ENCODE measurements at regions of chr10 and their contacts with region 1.

Region 1: DNA sequence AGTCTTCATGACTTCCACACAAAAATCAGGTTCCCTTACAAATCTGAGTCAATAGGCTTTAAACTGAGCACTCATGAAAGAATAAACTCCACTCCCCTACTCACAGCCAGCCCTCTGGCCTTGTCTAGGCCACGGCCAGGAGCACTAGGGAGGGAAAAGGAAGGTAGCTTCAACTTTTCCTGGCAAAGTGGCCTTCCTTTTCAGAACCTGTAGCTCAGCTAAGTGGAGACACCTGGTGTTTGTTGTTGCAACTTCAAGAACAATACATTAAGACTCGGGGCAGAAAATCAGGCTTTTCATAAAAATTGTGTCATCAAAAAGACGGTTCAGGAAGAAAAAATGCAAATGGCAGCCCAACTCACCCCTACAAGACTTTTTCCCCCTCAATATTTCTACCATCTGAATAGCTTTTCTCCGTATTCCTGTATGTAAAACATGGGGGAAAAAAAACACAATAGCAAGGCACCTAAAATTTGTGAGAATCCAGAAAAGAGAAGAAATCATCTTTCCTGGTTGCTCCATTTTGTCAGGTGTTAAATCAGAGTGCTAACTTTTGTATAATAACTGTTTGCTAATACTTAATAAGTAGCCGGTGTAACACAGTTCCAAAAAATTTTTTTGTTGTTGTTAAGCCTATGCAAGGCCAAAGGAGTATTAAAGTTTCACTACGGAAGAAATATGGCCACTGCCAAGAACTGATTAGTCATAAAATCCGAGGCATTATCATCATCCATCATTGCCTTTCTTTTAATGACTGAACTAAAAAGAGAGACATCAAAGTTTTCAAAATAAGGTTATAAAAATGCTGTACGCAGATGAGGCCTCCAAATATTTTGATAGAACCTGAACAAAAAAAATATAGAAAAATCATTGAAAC is 66.2 kb upstream of the ARID5B start:
- DNase-seq: peak; percentile 70 to 74
- H3K4me3 ChIP-seq: no peak overlapping the region
- H3K4me3 Mint-ChIP-seq: peak overlapping the region; percentile 58
- H3K27ac Mint-ChIP-seq: peak overlapping the region; percentile 94
- H3K4me1 ChIP-seq: peaks cover 80% of the 10 kb centered on the region
- H3K4me1 Mint-ChIP-seq: peaks cover 61% of the 10 kb centered on the region
- H3K27me3 ChIP-seq: no peaks in the 10 kb centered on the region
- H3K27me3 Mint-ChIP-seq: no peaks in the 10 kb centered on the region
- CTCF ChIP-seq: peak; percentile 75 to 85

Region 2: DNA sequence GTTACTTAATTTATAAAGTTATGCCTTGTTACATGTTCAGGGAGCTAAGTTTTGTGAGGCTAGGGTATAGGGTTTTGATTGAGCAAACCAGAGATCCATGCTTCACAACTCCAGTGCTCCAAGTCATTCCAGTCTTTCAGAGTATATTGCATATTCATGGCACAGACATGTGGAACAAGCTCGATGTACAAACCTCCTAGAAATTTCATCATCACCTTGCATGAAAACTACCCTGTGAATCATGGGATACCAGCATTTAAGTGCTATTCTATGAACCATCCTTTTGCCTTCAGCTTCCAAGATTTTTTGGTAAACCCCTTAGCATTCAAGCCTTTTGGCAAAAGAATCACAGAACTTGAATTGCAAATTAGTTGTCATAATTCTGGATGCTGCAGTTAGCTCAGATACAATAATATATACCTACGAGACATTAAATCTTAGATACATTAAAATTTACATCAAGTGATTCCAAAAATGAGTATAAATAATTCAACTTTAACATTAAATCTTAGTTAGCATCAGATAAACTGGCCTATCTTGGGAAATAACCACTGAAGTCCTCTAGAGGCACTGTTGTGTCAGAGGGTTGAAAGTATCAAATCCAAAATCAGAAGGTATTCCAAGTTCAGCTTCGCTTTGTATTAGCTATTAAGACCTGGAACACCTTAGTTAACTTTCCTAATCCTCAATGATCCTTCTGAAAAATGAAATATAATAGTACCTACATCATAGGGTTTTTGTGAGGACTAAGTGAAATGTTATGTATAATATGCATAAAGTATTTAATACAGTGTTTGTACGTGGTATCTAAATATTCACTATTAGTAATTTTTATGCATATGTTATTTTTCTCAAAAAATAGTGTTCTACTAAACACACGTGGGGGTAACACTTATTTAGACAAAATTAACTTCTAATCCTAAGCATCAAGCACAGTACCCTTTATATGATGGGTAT is 228.1 kb before region 1 on chr10:
- CTCF ChIA-PET with region 1: no interaction called
- POLR2A ChIA-PET with region 1: no interaction called
- intact Hi-C with region 1: loop called (anchors 5 kb)
- DNase-seq: no peak
- H3K4me3 ChIP-seq: no peak overlapping the region
- H3K4me3 Mint-ChIP-seq: no peak overlapping the region
- H3K27ac Mint-ChIP-seq: no peak overlapping the region
- H3K4me1 ChIP-seq: no peaks in the 10 kb centered on the region
- H3K4me1 Mint-ChIP-seq: no peaks in the 10 kb centered on the region
- H3K27me3 ChIP-seq: no peaks in the 10 kb centered on the region
- H3K27me3 Mint-ChIP-seq: peaks cover 30% of the 10 kb centered on the region
- CTCF ChIP-seq: peak; percentile 80 to 88

Region 3: DNA sequence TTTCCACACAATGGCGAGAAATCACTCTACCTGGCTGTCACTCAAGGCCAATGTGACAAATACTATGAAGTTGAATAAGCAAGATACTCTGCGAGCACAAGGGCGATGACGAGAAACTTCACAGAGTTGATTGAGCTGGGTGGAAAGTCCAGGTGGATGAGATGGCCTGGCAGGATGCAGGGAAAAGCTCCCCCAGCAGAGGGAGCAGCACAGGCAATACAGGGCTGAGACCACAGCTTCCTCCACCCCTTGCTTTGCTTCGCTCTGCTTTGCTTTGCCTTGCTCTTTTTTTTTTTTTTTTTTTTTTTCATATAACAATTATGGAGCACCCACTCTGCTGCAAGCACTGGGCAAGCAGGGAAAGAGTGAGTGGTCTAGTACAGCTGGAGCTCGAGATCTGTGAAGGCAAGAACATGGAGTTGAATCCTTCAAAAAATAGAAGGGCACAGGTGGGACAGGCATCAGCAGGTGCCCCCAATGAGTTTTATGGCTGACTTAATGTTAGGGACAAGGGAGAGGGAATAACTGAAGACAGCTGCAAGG is 84.3 kb before region 1 on chr10:
- CTCF ChIA-PET with region 1: interaction called, 132 read pairs
- POLR2A ChIA-PET with region 1: interaction called, 7 read pairs
- intact Hi-C with region 1: loop called (anchors 1 kb)
- DNase-seq: peak; percentile 93 to 94
- H3K4me3 ChIP-seq: no peak overlapping the region
- H3K4me3 Mint-ChIP-seq: peak overlapping the region; percentile 27
- H3K27ac Mint-ChIP-seq: peak overlapping the region; percentile 83
- H3K4me1 ChIP-seq: peaks cover 65% of the 10 kb centered on the region
- H3K4me1 Mint-ChIP-seq: peaks cover 54% of the 10 kb centered on the region
- H3K27me3 ChIP-seq: no peaks in the 10 kb centered on the region
- H3K27me3 Mint-ChIP-seq: no peaks in the 10 kb centered on the region
- CTCF ChIP-seq: peak; percentile 92 to 98

Region 4: DNA sequence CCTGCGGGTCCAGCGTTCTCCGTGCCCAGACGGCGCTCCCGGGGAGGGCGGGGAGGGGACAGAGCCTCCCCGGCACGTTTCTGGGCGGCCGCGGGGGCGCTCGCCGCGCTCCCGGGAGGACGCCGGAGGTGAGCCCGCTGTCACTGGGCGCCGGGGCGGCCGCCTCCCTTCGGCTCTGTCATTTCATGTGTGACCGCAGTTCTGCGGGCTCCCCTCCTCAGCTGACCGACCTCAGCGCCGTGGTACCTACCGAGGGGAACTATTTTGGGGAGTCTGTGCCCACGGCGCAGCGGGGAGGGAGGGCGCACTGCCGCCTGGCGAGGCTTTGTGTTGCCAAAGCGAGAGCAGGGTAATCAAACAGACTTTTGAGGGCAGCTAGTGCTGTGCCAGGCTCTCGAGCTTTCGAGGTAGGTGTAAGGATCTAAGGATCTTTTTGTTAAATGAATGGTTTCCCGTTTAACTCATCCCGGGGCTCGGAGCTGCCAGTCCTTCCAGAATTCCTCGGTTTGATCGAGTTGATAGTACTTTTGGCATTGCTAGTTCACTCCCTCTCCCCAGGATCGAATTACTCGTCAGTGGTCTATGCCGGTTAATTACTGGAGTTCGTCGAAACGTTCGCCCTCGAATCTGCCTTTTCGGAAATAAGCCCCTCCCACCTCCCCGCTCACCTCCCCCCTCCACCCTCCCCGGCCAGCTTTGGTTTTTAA is 68.1 kb after region 1 on chr10:
- CTCF ChIA-PET with region 1: interaction called, 17 read pairs
- POLR2A ChIA-PET with region 1: interaction called, 12 read pairs
- intact Hi-C with region 1: loop called (anchors 1 kb)
- DNase-seq: peak in 1 of 2 experiments; percentile 84
- H3K4me3 ChIP-seq: peak overlapping the region; percentile 97
- H3K4me3 Mint-ChIP-seq: peak overlapping the region; percentile 89
- H3K27ac Mint-ChIP-seq: peak overlapping the region; percentile 99
- H3K4me1 ChIP-seq: peaks cover 57% of the 10 kb centered on the region
- H3K4me1 Mint-ChIP-seq: peaks cover 34% of the 10 kb centered on the region
- H3K27me3 ChIP-seq: no peaks in the 10 kb centered on the region
- H3K27me3 Mint-ChIP-seq: no peaks in the 10 kb centered on the region
- CTCF ChIP-seq: peak; percentile 14 to 16

Region 5: DNA sequence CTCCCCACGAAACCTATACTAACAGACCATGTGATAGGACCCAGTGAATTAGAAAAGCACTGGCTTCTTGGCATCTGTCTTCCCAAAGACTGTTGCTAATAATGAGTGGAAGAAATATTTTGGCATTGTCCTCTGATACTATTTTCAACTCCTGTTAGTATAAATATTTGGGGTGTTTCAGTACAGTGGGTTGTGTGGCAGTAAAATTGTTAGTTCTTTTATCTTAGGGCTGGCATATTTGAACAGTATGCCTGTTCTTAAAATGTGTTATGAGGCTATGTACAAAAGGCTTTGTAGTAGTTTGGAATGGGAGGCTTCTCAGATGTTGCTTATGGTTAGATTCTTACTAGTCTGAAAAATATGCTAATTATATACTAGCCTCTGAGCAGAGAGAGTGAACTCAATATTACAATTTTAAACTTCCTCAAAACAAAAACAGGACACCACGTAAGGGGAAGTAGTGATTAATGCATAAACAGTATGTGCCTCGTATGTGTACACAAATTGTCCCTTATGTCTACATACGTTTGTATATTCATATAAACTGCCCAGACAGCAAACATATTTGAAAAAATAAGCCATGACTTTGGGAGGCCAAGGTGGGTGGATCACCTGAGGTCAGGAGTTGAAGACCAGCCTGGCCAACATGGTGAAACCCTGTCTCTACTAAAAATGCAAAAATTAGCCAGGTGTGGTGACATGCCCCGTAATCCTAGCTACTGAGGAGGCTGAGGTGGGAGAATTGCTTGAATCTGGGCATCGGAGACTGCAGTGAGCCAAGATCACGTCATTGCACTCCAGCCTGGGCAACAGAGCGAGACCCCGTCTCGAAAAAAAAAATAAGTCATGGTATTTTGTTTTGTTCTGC is 181.6 kb after region 1 on chr10:
- CTCF ChIA-PET with region 1: no interaction called
- POLR2A ChIA-PET with region 1: no interaction called
- intact Hi-C with region 1: loop called (anchors 2 kb)
- DNase-seq: no peak
- H3K4me3 ChIP-seq: no peak overlapping the region
- H3K4me3 Mint-ChIP-seq: peak overlapping the region; percentile 1
- H3K27ac Mint-ChIP-seq: peak overlapping the region; percentile 26
- H3K4me1 ChIP-seq: peaks cover 69% of the 10 kb centered on the region
- H3K4me1 Mint-ChIP-seq: peaks cover 63% of the 10 kb centered on the region
- H3K27me3 ChIP-seq: no peaks in the 10 kb centered on the region
- H3K27me3 Mint-ChIP-seq: no peaks in the 10 kb centered on the region
- CTCF ChIP-seq: no peak

Region 6: GRCh38 chr10:62095181-62096071 is 260.1 kb after region 1 on chr10:
- CTCF ChIA-PET with region 1: no interaction called
- POLR2A ChIA-PET with region 1: no interaction called
- intact Hi-C with region 1: loop called (anchors 1 kb)
- DNase-seq: peak in 1 of 2 experiments; percentile 82
- H3K4me3 ChIP-seq: no peak overlapping the region
- H3K4me3 Mint-ChIP-seq: peak overlapping the region; percentile 35
- H3K27ac Mint-ChIP-seq: peak overlapping the region; percentile 88
- H3K4me1 ChIP-seq: peaks cover 84% of the 10 kb centered on the region
- H3K4me1 Mint-ChIP-seq: peaks cover 70% of the 10 kb centered on the region
- H3K27me3 ChIP-seq: no peaks in the 10 kb centered on the region
- H3K27me3 Mint-ChIP-seq: no peaks in the 10 kb centered on the region
- CTCF ChIP-seq: no peak

Measured in Caco-2 (cell line).